ENCODE measurements at regions of chr22 and their contacts with region 1.

Region 1: DNA sequence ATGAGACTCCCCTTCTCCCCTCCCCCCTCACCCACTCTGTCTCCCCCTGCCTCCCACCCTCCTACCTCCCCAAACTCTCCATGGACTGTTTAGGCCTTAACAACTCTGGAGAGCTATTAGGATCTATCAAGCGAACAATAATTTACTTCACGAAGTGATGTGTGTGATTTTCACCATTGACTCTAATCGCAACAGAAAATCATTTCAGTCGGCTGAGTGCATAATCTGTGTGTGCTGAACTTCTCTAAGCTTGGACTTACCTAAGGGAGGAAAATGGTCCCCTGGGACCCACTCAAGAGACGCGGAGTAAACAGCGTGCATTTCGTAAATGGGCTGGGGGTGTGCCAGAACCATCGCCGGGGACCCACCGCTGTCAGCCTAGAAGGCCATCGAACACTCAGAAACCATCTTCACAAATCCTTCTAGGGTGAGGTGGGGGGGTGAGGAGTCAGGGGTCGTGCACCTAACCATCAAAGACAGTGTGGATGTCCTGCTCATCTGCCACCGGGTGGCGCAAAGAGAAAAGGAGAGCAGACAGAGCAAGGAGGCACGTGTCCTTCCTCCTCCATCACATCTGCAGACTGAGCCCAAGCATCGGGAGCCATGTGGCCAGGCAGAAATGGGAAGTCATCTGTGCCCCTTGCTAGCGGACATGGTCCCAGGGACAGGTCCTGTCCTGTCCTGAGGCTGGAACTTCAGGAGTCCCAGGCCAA is 62.1 kb upstream of the NUP50 start:
- H3K4me3 Mint-ChIP-seq: no peak overlapping the region
- H3K27ac Mint-ChIP-seq: no peak overlapping the region
- H3K4me1 Mint-ChIP-seq: peaks cover 39% of the 10 kb centered on the region
- H3K27me3 Mint-ChIP-seq: peaks cover 17% of the 10 kb centered on the region

Region 2: DNA sequence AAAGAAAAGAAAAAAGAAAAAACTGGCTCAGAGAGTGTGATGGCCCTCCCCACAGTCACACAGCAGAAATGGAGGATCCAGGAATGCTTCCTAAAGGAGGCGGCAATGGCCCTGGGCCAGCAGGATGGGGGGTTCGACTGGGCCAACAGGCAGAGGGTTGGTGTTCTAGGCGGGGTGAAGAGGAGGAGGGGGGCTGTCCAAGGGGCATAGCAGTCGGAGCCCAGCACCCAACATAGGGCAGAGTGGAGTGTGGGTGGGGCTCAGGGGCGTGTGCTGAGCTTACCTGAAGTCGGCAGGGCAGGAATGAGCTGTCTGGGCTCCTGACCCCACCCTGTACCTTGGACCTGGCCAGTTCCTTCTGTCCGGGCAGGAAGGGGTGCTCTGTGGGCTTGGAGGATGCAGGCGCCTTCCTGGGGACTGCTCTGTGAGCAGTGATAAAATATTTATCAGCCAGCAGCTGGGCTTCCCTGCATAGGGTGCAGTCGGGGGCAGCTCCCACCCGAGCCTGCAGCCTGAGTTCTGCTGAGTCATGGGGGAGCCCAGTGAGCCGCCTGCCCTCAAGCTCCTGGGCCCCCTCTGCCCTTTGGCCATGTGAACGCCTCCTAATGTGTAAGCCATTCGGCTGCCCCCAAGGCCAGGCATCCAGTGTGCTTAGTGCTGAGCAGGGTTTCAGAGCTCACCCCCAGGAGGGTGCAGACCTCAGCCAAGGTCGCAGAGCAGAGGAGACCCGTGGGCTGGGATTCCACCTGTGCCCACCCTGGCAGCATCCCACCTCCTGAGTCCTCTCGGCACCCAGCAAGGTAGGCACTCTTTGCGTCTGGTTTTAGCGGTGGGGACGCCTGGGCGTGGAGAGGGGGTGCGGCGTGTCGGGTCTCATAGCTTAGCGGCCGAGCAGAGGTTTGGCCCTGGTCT is 425.0 kb before region 1 on chr22:
- intact Hi-C with region 1: no loop called
- H3K4me3 Mint-ChIP-seq: peak overlapping the region; percentile 7
- H3K27ac Mint-ChIP-seq: no peak overlapping the region
- H3K4me1 Mint-ChIP-seq: peaks cover 13% of the 10 kb centered on the region
- H3K27me3 Mint-ChIP-seq: peaks cover 74% of the 10 kb centered on the region

Region 3: GRCh38 chr22:45164270-45165088 is 62.8 kb after region 1 on chr22:
- intact Hi-C with region 1: loop called (anchors 5 kb)
- H3K4me3 Mint-ChIP-seq: peak overlapping the region; percentile 91
- H3K27ac Mint-ChIP-seq: peak overlapping the region; percentile 92
- H3K4me1 Mint-ChIP-seq: peaks cover 66% of the 10 kb centered on the region
- H3K27me3 Mint-ChIP-seq: no peaks in the 10 kb centered on the region

Region 4: DNA sequence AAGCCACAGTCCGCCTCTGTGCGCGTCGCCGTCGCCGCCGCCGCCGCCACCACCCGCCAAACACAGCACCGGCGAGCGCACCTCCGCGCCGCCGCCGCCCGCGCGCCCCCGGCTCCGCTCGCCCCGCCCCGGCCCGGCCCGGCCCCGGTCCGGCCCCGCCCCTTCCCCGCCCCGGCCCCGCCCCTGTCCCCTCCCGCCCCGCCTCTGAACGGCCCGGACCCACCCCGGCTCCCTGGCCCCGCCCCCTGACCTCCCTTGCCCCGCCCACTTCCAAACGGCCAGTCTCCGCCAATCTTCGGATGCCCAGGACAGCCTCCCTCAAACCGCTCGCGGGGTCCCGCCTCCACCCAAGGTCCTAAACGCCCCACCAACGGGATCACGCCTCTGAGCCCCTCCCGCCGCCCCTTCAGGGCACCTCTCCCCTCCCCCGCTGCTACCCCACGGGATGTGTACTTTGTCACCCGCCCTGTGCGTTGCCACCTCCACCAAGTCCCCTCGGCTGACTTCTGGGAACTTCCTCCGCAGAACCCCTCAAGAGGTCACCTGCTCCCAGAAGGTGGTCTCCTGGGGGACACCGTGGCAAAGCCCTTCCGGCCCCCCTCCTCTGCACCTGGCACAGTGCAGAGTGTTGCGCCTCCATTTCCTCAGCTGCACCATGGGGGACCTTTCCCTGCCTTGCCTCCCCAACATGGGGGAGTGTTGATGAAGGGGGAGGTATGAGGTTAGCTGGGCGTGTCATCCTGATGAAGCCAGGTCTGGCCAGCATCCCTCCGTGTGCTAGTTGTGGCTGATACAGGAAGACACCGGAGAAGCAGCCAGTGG is 139.3 kb after region 1 on chr22 and contains the start of gene KIAA0930:
- intact Hi-C with region 1: loop called (anchors 5 kb)
- H3K4me3 Mint-ChIP-seq: peak within 1 kb of the TSS; percentile 90
- H3K27ac Mint-ChIP-seq: peak within 1 kb of the TSS; percentile 91
- H3K4me1 Mint-ChIP-seq: peaks cover 65% of the 10 kb centered on the region
- H3K27me3 Mint-ChIP-seq: peaks cover 2% of the 10 kb centered on the region